ENCODE measurements at regions of chr11 and their contacts with region 1.

Region 1: GRCh38 chr11:13343931-13344717 is 66.5 kb downstream of the BMAL1 start:
- DNase-seq: peak in 4 of 5 donors; percentile 55 to 70 (median 64)
- ATAC-seq: peak in 3 of 4 donors; percentile 40 to 58 (median 41)
- H3K4me3 ChIP-seq: no peak overlapping the region
- H3K27ac ChIP-seq: no peak overlapping the region
- H3K4me1 ChIP-seq: peaks cover 0 to 30% (median 11%) of the 10 kb centered on the region in 12 donors
- H3K27me3 ChIP-seq: no peaks in the 10 kb centered on the region
- CTCF ChIP-seq: peak; percentile 69 to 91 (median 84)
- POLR2A ChIP-seq: no peak

Region 2: GRCh38 chr11:12963792-12964536 is 380.2 kb before region 1 on chr11:
- intact Hi-C with region 1: loop called in 9 of 10 experiments (anchors 5 to 10 kb)
- DNase-seq: peak; percentile 50 to 69 (median 57)
- ATAC-seq: peak; percentile 60 to 93 (median 91)
- H3K4me3 ChIP-seq: no peak overlapping the region
- H3K27ac ChIP-seq: no peak overlapping the region
- H3K4me1 ChIP-seq: peaks cover 0 to 5% (median 0%) of the 10 kb centered on the region in 12 donors
- H3K27me3 ChIP-seq: no peaks in the 10 kb centered on the region
- CTCF ChIP-seq: peak; percentile 72 to 94 (median 86)
- POLR2A ChIP-seq: no peak

Region 3: DNA sequence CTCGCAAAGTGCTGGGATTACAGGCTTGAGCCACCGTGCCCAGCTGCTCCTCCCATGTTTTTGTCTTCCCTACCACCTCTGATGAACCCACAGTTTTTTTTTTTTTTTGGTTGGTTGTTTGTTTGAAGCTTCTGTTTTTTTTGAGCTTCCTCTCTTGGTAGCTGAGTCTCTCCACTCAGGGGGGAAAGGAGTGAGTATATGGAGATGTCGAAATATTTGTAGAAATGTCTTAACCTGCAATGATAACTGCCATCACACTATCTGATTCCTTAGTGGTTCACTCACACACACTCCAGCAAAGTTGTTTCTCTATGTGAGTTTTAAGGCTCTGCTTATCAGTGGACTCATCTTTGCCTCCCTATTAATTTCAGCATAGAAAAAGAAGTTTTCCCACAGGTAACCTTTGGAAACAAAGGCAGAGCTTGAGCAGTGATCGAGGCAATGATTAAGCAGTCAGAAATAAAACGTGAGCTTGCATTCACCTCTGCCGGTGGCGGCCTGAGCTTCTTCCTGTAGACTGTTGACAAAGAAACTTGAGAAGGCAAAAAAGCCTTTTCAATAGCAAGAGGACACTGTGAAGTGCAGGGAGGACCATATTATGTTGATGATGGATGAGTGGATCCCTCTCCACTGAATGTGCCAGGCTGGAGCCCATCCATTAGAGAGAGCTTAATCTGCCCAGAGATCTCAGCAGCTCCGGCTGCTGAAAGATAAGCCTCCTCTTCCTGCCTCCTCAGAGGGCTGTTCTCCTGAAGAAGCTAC is 364.0 kb before region 1 on chr11:
- intact Hi-C with region 1: loop called in 1 of 10 experiments (anchors 10 kb)
- DNase-seq: no peak
- ATAC-seq: no peak
- H3K4me3 ChIP-seq: no peak overlapping the region
- H3K27ac ChIP-seq: no peak overlapping the region
- H3K4me1 ChIP-seq: no peaks in the 10 kb centered on the region
- H3K27me3 ChIP-seq: peaks cover 0 to 3% (median 0%) of the 10 kb centered on the region in 9 donors
- CTCF ChIP-seq: no peak
- POLR2A ChIP-seq: no peak

Region 4: GRCh38 chr11:13183094-13183825 is 160.9 kb before region 1 on chr11:
- intact Hi-C with region 1: loop called in 1 of 10 experiments (anchors 2 kb)
- DNase-seq: no peak
- ATAC-seq: peak in 2 of 4 donors; percentile 36 to 63
- H3K4me3 ChIP-seq: peak overlapping the region in 8 of 12 donors; percentile 5 to 40 (median 20)
- H3K27ac ChIP-seq: no peak overlapping the region
- H3K4me1 ChIP-seq: peaks cover 0 to 8% (median 4%) of the 10 kb centered on the region in 12 donors
- H3K27me3 ChIP-seq: no peaks in the 10 kb centered on the region
- CTCF ChIP-seq: peak in 11 of 12 donors; percentile 20 to 62 (median 44)
- POLR2A ChIP-seq: no peak

Region 5: DNA sequence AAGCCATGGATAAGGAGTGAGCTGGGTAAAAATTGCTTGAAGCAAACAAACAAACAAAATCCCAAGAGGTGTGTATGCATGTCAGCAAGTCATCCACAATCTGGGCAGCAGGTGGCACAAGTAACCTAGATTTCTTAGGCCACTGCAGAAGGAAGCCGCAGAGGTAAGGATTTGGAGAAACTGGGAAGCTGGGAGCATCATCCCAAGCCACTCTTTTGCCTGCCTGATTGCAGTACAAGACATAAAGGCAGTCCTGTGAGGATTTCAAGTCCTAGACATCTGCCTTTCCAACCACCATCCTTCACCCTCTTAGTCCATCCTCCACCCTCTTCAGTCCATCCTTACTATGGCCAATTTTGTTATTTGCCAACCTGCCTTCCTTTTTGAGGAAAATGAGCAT is 133.7 kb before region 1 on chr11:
- intact Hi-C with region 1: loop called (anchors 1 to 5 kb)
- DNase-seq: peak in 4 of 5 donors; percentile 39 to 58 (median 52)
- ATAC-seq: peak in 3 of 4 donors; percentile 78 to 79 (median 78)
- H3K4me3 ChIP-seq: no peak overlapping the region
- H3K27ac ChIP-seq: no peak overlapping the region
- H3K4me1 ChIP-seq: peaks cover 0 to 28% (median 5%) of the 10 kb centered on the region in 12 donors
- H3K27me3 ChIP-seq: no peaks in the 10 kb centered on the region
- CTCF ChIP-seq: peak; percentile 30 to 73 (median 62)
- POLR2A ChIP-seq: no peak

Region 6: DNA sequence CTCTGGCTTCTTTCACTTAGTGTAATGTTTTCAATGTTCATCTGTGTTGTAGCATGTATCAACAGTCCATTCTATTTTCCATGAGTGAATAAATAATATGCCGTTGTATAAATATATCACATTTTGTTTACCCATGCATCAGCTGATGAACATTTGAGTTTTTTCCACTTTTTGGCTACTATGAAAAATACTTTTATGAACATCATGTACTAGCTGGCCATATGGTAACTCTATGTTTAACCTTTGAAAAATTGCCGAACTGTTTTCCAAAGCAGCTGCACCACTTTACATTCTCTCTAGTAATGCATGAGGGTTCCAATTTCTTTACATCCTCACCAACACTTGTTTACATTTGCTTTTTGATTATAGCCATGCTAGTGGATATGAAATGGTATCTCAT is 264.5 kb after region 1 on chr11:
- intact Hi-C with region 1: no loop called
- DNase-seq: no peak
- ATAC-seq: no peak
- H3K4me3 ChIP-seq: no peak overlapping the region
- H3K27ac ChIP-seq: no peak overlapping the region
- H3K4me1 ChIP-seq: no peaks in the 10 kb centered on the region
- H3K27me3 ChIP-seq: no peaks in the 10 kb centered on the region
- CTCF ChIP-seq: no peak
- POLR2A ChIP-seq: no peak

Measured in heart left ventricle (tissue), 16 donors.